ENCODE measurements at regions of chr14 and their contacts with region 1.

Region 1: DNA sequence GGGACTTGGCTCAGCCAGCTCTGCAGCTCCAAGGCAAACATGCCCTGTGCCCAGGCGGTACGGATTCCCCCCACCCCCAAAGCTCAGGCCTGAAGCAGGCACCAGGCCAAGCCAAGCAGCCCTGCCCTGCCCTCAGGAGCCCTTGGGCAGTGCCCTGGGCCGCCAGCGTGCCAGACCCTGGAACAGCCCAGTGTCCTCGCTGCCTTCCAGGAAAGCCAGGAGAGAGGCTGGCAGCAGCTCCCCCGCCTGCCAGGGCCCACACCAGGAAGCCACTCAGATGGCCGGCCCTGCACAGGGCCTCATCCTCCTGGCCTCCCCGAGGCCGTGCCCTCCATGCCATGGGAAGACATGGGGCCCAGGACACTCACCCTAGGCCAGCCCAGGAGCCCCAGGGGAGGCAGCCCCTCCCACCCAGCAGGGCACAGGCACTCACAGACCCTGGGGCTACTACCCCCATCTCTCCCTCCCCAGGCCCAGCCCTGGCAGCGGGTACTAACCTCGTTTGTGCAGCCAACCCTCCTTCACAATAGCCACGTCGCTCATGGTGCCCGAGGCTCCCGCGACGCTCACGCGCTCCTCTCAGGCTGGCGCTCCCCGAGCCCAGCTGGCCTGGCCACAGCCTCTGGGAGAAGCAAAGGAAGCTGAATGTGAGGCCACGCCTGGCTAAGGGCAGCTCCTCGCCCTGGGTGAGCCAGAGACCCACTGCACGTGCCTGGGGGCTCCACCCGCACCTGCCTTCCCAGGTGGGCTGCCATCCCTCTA is 3.3 kb downstream of the AKT1 start:
- H3K4me3 ChIP-seq: no peak overlapping the region
- H3K27ac ChIP-seq: no peak overlapping the region
- H3K4me1 ChIP-seq: peaks cover 10% of the 10 kb centered on the region
- CTCF ChIP-seq: no peak

Region 2: GRCh38 chr14:103663506-103663905 is 1128.8 kb before region 1 on chr14:
- CTCF ChIA-PET with region 1: no interaction called
- POLR2A ChIA-PET with region 1: interaction called, 14 read pairs
- H3K4me3 ChIP-seq: no peak overlapping the region
- H3K27ac ChIP-seq: no peak overlapping the region
- H3K4me1 ChIP-seq: no peaks in the 10 kb centered on the region
- CTCF ChIP-seq: no peak